ENCODE measurements at regions of chrX and their contacts with region 1.

Region 1: GRCh38 chrX:53317365-53318069 is 36.1 kb upstream of the IQSEC2 start:
- DNase-seq: peak; percentile 28
- H3K4me3 ChIP-seq: no peak overlapping the region
- H3K27ac ChIP-seq: no peak overlapping the region
- H3K4me1 ChIP-seq: peaks cover 7% of the 10 kb centered on the region
- H3K27me3 ChIP-seq: peaks cover 32% of the 10 kb centered on the region
- CTCF ChIP-seq: peak; percentile 79 to 93

Region 2: DNA sequence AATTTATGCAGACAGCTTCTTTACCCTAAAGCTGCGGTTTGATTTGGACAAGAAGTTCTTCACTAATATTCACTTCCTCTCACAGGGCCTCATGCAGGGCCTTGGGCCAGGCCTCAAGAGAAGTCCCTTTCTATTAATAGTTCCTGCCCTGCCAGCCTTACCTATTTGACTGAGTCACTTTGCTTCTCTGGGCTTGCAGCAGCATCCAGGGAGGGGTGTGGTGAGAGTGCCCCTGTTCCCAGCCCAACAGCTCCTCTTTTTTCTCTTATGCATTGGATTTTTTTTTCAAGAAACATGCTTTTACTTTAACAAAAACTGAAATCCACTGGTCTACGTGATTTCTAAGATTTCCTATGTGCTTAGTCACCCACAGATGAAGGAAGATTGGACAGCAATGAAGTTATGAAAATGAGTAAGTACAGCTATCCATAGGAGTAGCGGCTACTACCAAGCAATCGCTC is 393.7 kb before region 1 on chrX:
- CTCF ChIA-PET with region 1: no interaction called
- dilution Hi-C with region 1: no loop called
- in situ Hi-C with region 1: no loop called
- intact Hi-C with region 1: no loop called
- DNase-seq: peak; percentile 61
- H3K4me3 ChIP-seq: no peak overlapping the region
- H3K27ac ChIP-seq: no peak overlapping the region
- H3K4me1 ChIP-seq: peaks cover 7% of the 10 kb centered on the region
- H3K27me3 ChIP-seq: peaks cover 2% of the 10 kb centered on the region
- CTCF ChIP-seq: no peak

Region 3: GRCh38 chrX:53071604-53072417 is 245.7 kb before region 1 on chrX:
- CTCF ChIA-PET with region 1: interaction called, 3 read pairs
- dilution Hi-C with region 1: no loop called
- in situ Hi-C with region 1: no loop called
- intact Hi-C with region 1: loop called (anchors 5 kb)
- DNase-seq: peak; percentile 64
- H3K4me3 ChIP-seq: peak overlapping the region; percentile 6 to 46 (median 36)
- H3K27ac ChIP-seq: no peak overlapping the region
- H3K4me1 ChIP-seq: peaks cover 4% of the 10 kb centered on the region
- H3K27me3 ChIP-seq: peaks cover 3% of the 10 kb centered on the region
- CTCF ChIP-seq: peak; percentile 57 to 74

Region 4: GRCh38 chrX:53224860-53225797 is 92.4 kb before region 1 on chrX and contains the start of gene KDM5C:
- CTCF ChIA-PET with region 1: no interaction called
- dilution Hi-C with region 1: no loop called
- in situ Hi-C with region 1: no loop called
- intact Hi-C with region 1: no loop called
- DNase-seq: peak; percentile 90
- H3K4me3 ChIP-seq: peak within 1 kb of the TSS; percentile 84 to 92 (median 86)
- H3K27ac ChIP-seq: peak within 1 kb of the TSS; percentile 97
- H3K4me1 ChIP-seq: peaks cover 27% of the 10 kb centered on the region
- H3K27me3 ChIP-seq: no peaks in the 10 kb centered on the region
- CTCF ChIP-seq: no peak
- total RNA-seq, gene KDM5C: 106 to 125 TPM

Region 5: GRCh38 chrX:53244610-53245009 is 72.9 kb before region 1 on chrX:
- CTCF ChIA-PET with region 1: no interaction called
- dilution Hi-C with region 1: no loop called
- in situ Hi-C with region 1: no loop called
- intact Hi-C with region 1: loop called (anchors 5 kb)
- DNase-seq: no peak
- H3K4me3 ChIP-seq: no peak overlapping the region
- H3K27ac ChIP-seq: no peak overlapping the region
- H3K4me1 ChIP-seq: no peaks in the 10 kb centered on the region
- H3K27me3 ChIP-seq: peaks cover 2% of the 10 kb centered on the region
- CTCF ChIP-seq: peak in 1 of 2 donors; percentile 20

Region 6: DNA sequence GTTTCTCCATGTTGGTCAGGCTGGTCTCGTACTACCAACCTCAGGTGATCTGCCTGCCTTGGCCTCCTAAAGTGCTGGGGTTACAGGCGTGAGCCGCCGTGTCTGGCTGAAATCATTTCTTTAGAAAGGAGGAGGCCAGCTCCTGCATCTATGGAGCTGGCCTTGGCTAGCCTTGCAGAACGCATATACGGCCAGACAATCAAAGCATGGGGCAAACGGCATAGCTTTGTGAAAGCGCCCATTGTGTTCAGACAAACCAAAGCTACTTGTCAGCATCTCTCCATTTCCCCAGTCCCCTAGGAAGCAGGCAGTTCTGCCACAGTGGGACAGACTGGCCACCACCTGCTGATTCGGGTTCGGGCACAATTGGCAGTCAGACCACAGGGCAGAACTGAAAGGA is 12.8 kb after region 1 on chrX:
- CTCF ChIA-PET with region 1: interaction called, 6 read pairs
- dilution Hi-C with region 1: no loop called
- in situ Hi-C with region 1: no loop called
- intact Hi-C with region 1: loop called (anchors 1 kb)
- DNase-seq: no peak
- H3K4me3 ChIP-seq: no peak overlapping the region
- H3K27ac ChIP-seq: no peak overlapping the region
- H3K4me1 ChIP-seq: no peaks in the 10 kb centered on the region
- H3K27me3 ChIP-seq: peaks cover 14% of the 10 kb centered on the region
- CTCF ChIP-seq: no peak

Region 7: DNA sequence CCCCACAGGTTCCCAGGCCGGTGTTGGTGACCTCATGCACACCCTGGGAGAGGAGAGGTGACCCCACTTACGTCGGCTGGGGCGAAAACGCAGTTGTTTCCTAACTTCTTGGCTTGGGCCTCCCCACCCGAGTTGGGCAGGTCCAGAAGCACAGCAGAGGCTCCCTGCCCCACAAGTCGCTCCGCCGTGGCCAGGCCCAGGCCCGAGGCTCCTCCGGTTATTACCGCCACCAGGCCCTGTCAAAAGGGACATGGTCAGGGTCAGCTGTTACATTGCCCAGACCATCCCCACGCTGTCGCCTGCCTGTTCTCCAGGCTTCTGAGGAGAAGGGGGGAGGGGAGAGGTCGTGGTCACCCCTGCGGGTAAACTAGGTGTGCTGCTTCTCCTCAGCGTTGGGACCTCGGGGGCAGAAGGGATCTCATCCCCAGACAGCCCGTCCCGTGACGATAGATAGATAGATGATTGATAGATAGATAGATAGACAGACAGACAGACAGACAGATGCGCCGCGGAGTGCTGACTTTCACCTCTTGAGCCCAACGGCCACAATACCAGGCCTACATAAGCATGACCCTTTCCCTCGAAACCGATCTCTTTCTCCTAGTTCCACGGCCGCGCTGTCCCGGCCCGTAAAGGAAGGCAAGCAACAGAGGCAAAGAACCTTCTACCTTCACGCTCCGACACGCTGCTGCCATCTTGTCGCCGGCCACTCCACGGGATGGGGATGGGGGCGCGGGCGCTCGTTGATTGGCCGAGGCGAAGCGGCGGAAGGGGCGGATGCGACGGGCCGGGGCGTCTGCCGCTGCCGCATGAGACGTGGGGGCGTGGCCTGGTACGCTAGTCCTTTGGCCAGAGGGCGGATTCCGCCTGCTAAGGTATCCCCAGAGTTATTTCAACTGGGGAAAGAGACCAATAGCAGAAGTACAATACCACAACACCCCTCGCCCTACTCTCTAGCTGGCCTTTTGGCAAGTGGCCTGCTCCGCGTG is 116.4 kb after region 1 on chrX and contains the start of gene HSD17B10:
- CTCF ChIA-PET with region 1: no interaction called
- dilution Hi-C with region 1: no loop called
- in situ Hi-C with region 1: loop called in 1 of 2 experiments (anchors 5 kb)
- intact Hi-C with region 1: loop called (anchors 1 kb)
- DNase-seq: peak; percentile 76
- H3K4me3 ChIP-seq: peak within 1 kb of the TSS; percentile 36 to 65 (median 63)
- H3K27ac ChIP-seq: peak within 1 kb of the TSS; percentile 56
- H3K4me1 ChIP-seq: peaks cover 4% of the 10 kb centered on the region
- H3K27me3 ChIP-seq: peaks cover 3% of the 10 kb centered on the region
- CTCF ChIP-seq: no peak
- total RNA-seq, gene HSD17B10: 71.7 to 74.6 TPM

Region 8: GRCh38 chrX:53481816-53482465 is 164.4 kb after region 1 on chrX:
- CTCF ChIA-PET with region 1: interaction called, 3 read pairs
- dilution Hi-C with region 1: no loop called
- in situ Hi-C with region 1: no loop called
- intact Hi-C with region 1: loop called (anchors 1 kb)
- DNase-seq: peak; percentile 61
- H3K4me3 ChIP-seq: no peak overlapping the region
- H3K27ac ChIP-seq: no peak overlapping the region
- H3K4me1 ChIP-seq: peaks cover 29% of the 10 kb centered on the region
- H3K27me3 ChIP-seq: no peaks in the 10 kb centered on the region
- CTCF ChIP-seq: peak; percentile 83 to 86

Region 9: DNA sequence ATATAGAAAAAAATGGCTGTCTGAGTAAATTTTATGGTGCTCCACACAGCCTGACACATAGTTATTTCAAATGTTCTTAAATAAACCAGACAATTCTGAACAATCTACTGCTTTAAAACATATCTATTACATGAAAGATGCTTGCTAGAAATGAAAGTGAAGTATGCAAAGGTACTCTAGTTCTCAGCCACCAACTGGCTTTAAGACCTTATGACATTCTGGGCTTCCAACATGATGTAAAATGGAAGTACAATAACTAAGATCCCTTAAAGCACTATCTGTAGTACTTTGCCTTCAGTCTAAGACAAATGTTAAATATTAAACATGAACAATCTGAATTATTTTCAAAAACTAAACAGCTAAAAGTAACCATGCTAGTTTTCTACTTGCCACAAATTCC is 351.7 kb after region 1 on chrX:
- CTCF ChIA-PET with region 1: no interaction called
- dilution Hi-C with region 1: no loop called
- in situ Hi-C with region 1: no loop called
- intact Hi-C with region 1: no loop called
- DNase-seq: no peak
- H3K4me3 ChIP-seq: no peak overlapping the region
- H3K27ac ChIP-seq: no peak overlapping the region
- H3K4me1 ChIP-seq: no peaks in the 10 kb centered on the region
- H3K27me3 ChIP-seq: no peaks in the 10 kb centered on the region
- CTCF ChIP-seq: no peak

Region 10: GRCh38 chrX:55057675-55058249 is 1740.2 kb after region 1 on chrX:
- CTCF ChIA-PET with region 1: no interaction called
- dilution Hi-C with region 1: no loop called
- in situ Hi-C with region 1: no loop called
- intact Hi-C with region 1: loop called (anchors 5 kb)
- DNase-seq: peak; percentile 9
- H3K4me3 ChIP-seq: no peak overlapping the region
- H3K27ac ChIP-seq: no peak overlapping the region
- H3K4me1 ChIP-seq: no peaks in the 10 kb centered on the region
- H3K27me3 ChIP-seq: peaks cover 8% of the 10 kb centered on the region
- CTCF ChIP-seq: peak; percentile 82 to 92